Astrocyte of the cerebellum (primary cell): ENCODE measurements at regions of chr16 and their contacts with region 1.

Region 1: DNA sequence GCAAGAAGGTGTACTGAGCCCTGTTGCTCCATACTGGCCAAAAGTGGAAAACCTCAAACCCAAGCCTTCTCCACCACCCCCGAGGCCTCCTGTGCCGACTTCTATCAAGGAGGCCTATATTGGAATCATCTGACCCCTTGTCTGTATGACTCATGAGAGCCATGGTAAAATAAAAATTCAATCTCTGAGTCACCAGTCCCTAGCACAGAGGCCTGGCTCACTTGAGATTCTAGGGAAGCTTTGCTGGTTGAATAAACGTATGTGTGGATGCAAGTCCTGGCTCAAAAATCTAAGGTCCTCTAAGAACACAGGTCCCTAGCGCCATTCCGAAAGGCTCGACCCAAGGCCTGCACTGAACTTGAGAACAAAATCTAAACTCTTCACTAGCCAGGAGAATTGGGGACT is 15.0 kb downstream of the NSMCE1 start:
- DNase-seq: peak; percentile 73
- H3K4me3 ChIP-seq: no peak overlapping the region
- CTCF ChIP-seq: no peak

Region 2: DNA sequence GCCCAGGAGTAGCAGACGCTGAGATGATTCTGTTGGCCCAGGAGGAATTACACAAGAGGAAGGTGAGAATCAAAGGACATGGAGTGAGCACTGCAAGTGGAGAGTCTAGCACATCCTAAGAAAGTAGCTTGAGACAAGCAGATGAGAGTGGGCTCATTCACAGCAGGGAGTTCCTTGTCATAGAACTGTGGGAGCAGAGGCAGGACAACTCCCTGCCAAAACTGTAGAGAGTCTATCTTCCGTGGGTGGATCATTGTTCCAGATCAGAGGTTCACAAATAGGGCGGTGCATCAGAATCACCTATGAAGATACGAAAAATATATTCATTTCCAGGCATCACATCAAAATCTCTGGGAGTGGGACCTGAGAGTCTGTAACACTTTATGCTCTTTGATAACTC is 475.7 kb before region 1 on chr16:
- in situ Hi-C with region 1: no loop called
- DNase-seq: no peak
- H3K4me3 ChIP-seq: no peak overlapping the region
- CTCF ChIP-seq: no peak

Region 3: GRCh38 chr16:27353853-27354252 is 100.3 kb after region 1 on chr16:
- in situ Hi-C with region 1: loop called (anchors 5 kb)
- DNase-seq: no peak
- H3K4me3 ChIP-seq: no peak overlapping the region
- CTCF ChIP-seq: no peak